ENCODE measurements at regions of chr10 and their contacts with region 1.

Region 1: DNA sequence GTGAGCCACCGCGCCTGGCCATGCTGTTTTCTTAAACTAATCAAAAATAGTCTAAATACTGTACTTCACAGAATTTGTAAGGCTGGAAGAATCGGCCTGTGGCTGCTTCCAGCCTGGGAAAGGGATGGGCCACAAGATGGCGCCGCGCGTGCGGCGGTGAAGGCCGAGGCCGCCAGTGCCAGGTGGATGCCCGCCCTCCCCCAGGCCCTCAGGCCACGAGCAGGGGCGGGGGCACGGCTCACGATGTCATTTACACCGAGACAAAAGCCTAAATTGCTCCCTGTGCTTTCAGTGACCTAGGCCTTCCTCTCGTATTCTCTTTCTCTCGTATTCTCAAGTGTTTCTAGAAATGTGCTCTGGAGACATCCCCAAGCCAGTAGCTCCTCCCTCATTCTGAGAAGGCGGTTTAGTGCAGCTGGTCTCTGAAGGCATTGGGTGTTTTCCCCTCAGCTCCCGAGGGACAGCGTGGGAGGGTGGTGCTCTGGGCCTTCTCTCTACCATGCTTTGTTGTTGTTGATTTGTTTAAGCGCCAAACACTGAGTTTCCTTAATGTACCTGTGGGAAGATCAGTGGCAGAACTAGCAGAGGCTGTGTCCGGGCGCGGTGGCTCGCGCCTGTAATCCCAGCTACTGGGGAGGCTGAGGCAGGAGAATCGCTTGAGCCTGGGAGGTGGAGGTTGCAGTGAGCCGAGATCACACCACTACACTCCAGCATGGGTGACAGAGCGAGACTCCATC is 68.4 kb downstream of the CDC123 start:
- DNase-seq: peak; percentile 73 to 86
- H3K4me3 ChIP-seq: peak overlapping the region; percentile 31; the same call in 1 of the 2 replicates
- H3K27ac ChIP-seq: peak overlapping the region; percentile 68
- H3K4me1 ChIP-seq: peaks cover 30% of the 10 kb centered on the region
- H3K27me3 ChIP-seq: no peaks in the 10 kb centered on the region
- CTCF ChIP-seq: peak; percentile 81

Region 2: DNA sequence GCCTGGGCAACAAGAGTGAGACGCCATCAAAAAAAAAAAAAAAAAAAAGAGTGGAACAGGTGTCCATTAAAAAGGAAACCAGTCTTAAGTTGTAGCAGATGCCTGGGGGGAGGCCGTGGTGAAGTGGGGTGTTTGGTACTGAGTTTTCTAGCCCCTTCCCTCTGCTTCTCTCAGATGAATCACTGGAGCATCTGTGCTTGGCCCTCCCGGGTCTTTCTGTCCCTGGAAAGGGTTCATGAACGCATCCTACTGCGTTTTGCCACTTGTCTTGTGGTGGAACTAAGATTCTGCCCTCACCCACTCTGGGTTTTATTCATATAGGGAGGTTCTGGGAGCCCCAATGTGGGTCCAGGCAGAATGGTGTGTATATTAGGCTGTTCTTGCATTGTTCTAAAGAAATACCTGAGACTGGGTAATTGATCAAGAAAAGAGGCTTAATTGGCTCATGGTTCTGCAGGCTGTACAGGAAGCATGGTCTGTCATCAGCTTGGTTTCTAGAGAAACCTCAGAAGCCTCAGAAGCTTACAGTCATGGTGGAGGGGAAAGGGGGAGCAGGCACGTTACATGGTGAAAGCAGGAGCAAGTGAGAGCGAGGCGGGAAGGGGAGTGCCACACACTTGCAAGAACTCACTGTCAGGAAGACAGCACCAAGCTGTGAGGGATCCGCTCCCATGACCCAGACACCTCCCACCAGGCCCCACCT is 148.4 kb after region 1 on chr10:
- CTCF ChIA-PET with region 1: no interaction called
- POLR2A ChIA-PET with region 1: no interaction called
- intact Hi-C with region 1: no loop called
- DNase-seq: no peak
- H3K4me3 ChIP-seq: no peak overlapping the region
- H3K27ac ChIP-seq: no peak overlapping the region
- H3K4me1 ChIP-seq: no peaks in the 10 kb centered on the region
- H3K27me3 ChIP-seq: no peaks in the 10 kb centered on the region
- CTCF ChIP-seq: no peak

Region 3: GRCh38 chr10:12448729-12449391 is 184.5 kb after region 1 on chr10:
- CTCF ChIA-PET with region 1: no interaction called
- POLR2A ChIA-PET with region 1: no interaction called
- intact Hi-C with region 1: loop called (anchors 2 kb)
- DNase-seq: peak; percentile 53 to 96
- H3K4me3 ChIP-seq: peak overlapping the region; percentile 35; the same call in 1 of the 2 replicates
- H3K27ac ChIP-seq: peak overlapping the region; percentile 99
- H3K4me1 ChIP-seq: peaks cover 39% of the 10 kb centered on the region
- H3K27me3 ChIP-seq: no peaks in the 10 kb centered on the region
- CTCF ChIP-seq: no peak

Region 4: GRCh38 chr10:12459762-12460161 is 195.4 kb after region 1 on chr10:
- CTCF ChIA-PET with region 1: no interaction called
- POLR2A ChIA-PET with region 1: no interaction called
- intact Hi-C with region 1: no loop called
- DNase-seq: no peak
- H3K4me3 ChIP-seq: no peak overlapping the region
- H3K27ac ChIP-seq: no peak overlapping the region
- H3K4me1 ChIP-seq: peaks cover 18% of the 10 kb centered on the region
- H3K27me3 ChIP-seq: no peaks in the 10 kb centered on the region
- CTCF ChIP-seq: no peak

Region 5: DNA sequence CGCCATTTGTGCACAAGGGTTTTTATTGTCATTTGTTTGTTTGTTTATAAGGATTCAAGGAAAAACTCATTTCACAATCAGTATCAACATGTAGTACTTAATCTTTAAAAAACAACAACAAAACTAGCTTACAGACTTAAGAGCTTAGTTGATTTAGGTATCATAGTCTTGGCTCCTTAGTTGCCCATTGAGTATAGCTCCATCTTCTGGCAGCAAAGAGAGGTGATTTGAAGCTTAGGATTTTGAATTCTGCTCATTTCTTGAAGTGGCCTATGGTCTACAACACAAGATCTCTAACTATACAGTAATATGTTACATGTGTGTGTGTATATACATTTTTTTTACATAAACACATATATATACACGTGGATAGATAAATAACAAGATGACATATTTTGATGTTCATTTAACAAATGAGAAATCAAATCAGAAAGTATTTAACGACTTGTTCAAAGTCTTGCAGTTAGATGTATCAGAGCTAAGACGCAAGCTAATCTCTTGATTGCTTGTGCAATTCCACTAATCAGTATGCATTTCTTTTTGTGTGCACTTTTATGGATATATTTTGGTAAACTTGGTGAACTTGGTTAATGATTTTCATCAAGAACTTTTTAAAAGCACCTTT is 392.3 kb after region 1 on chr10:
- CTCF ChIA-PET with region 1: interaction called, 20 read pairs
- POLR2A ChIA-PET with region 1: interaction called, 7 read pairs
- intact Hi-C with region 1: loop called (anchors 1 kb)
- DNase-seq: peak in 1 of 2 experiments; percentile 44
- H3K4me3 ChIP-seq: no peak overlapping the region
- H3K27ac ChIP-seq: no peak overlapping the region
- H3K4me1 ChIP-seq: no peaks in the 10 kb centered on the region
- H3K27me3 ChIP-seq: no peaks in the 10 kb centered on the region
- CTCF ChIP-seq: peak; percentile 76

Region 6: DNA sequence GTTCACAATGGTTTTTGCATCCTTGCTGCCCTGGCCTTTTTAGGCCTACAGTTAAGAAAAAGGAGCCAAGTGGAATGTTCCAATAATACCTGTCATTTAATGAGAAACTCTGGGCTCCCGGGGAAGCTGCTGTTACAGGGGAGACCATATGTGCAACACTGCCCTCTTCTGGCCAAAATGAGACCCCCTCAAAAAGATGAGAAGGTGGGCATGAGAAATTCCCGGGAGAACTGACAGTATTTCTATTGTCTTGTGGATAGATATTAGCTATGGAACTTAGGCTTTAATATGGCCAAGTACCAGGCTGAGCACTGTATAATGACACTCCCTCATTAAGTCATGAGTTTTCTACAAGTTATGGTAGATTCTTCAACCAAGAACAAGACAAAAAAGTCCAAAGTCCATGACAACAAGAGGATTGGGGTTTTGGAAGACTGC is 637.8 kb after region 1 on chr10:
- CTCF ChIA-PET with region 1: no interaction called
- POLR2A ChIA-PET with region 1: no interaction called
- intact Hi-C with region 1: loop called (anchors 5 kb)
- DNase-seq: peak in 1 of 2 experiments; percentile 36
- H3K4me3 ChIP-seq: no peak overlapping the region
- H3K27ac ChIP-seq: no peak overlapping the region
- H3K4me1 ChIP-seq: no peaks in the 10 kb centered on the region
- H3K27me3 ChIP-seq: peaks cover 33% of the 10 kb centered on the region
- CTCF ChIP-seq: peak; percentile 82

Measured in PC-9 (cell line).